GM12878 (cell line): ENCODE measurements at regions of chr1 and their contacts with region 1.

Region 1: DNA sequence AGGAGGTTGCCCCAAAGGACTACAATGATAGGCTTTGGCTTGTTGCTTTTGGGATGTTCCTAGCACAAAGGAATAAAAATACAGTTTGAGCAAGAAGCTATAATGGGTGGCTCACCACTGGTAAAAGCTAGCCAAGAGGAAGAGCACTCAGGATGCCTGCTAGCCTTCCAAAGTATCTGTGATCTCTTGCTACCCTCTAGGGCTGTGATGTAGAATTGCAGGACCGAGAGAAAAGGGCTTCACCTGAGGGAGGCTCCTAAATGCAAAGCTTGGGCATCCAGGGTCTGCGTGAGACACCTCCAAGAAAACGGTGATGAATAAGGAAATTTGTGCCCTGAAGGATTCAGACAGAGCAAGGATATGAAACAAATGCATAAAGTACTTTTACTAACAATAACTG is 17.7 kb downstream of the IVL start:
- DNase-seq: no peak
- ATAC-seq: peak; percentile 87
- H3K4me3 ChIP-seq: no peak overlapping the region
- H3K27ac ChIP-seq: no peak overlapping the region
- H3K4me1 ChIP-seq: no peaks in the 10 kb centered on the region
- H3K27me3 ChIP-seq: peaks cover 0 to 2% of the 10 kb centered on the region in 2 experiments; a peak in 1 of 4 replicates
- CTCF ChIP-seq: peak; percentile 74 to 80 (median 78); a peak in 5 of 6 replicates
- EP300 ChIP-seq: no peak
- POLR2A ChIP-seq: no peak
- RAD21 ChIP-seq: peak; percentile 99

Region 2: GRCh38 chr1:152495066-152495675 is 430.9 kb before region 1 on chr1:
- CTCF ChIA-PET with region 1: interaction called, 10 read pairs
- POLR2A ChIA-PET with region 1: no interaction called
- RAD21 ChIA-PET with region 1: no interaction called
- SMC1A ChIA-PET with region 1: no interaction called
- in situ Hi-C with region 1: no loop called
- intact Hi-C with region 1: no loop called
- DNase-seq: no peak
- ATAC-seq: peak; percentile 72
- H3K4me3 ChIP-seq: no peak overlapping the region
- H3K27ac ChIP-seq: no peak overlapping the region
- H3K4me1 ChIP-seq: no peaks in the 10 kb centered on the region
- H3K27me3 ChIP-seq: no peaks in the 10 kb centered on the region
- CTCF ChIP-seq: peak; percentile 55 to 90 (median 82)
- EP300 ChIP-seq: no peak
- POLR2A ChIP-seq: no peak
- RAD21 ChIP-seq: peak; percentile 59

Region 3: DNA sequence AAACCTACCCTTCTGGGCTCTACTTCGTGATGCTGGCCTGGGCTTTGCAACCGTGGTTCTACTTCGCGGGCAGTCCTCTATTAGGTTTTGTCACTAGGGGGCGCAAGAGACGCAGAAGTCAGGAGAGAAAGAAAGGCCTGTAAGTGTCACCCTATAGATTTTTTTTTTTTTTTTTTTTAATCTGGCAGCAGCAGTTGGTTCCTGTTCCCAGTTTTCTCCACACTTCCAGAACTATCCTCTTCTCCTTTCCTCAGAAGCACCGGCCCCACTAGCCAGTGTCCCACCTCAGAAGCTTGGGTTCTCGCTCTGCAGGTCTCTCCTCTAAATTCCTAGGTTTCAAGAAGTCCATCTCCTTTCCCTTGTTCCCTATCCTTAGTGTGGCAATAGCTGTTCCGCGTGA is 272.0 kb before region 1 on chr1:
- CTCF ChIA-PET with region 1: interaction called, 25 read pairs
- POLR2A ChIA-PET with region 1: no interaction called
- RAD21 ChIA-PET with region 1: interaction called, 18 read pairs
- SMC1A ChIA-PET with region 1: interaction called, 19 read pairs
- in situ Hi-C with region 1: loop called (anchors 5 kb)
- intact Hi-C with region 1: loop called (anchors 5 kb)
- DNase-seq: no peak
- ATAC-seq: peak; percentile 93
- H3K4me3 ChIP-seq: no peak overlapping the region
- H3K27ac ChIP-seq: no peak overlapping the region
- H3K4me1 ChIP-seq: no peaks in the 10 kb centered on the region
- H3K27me3 ChIP-seq: peaks cover 0 to 9% of the 10 kb centered on the region in 2 experiments; a peak in 2 of 4 replicates
- CTCF ChIP-seq: peak; percentile 68 to 84 (median 80)
- EP300 ChIP-seq: no peak
- POLR2A ChIP-seq: no peak
- RAD21 ChIP-seq: peak; percentile 77

Region 4: GRCh38 chr1:152878042-152878441 is 48.0 kb before region 1 on chr1 and contains the start of gene SMCP:
- CTCF ChIA-PET with region 1: interaction called, 106 read pairs
- POLR2A ChIA-PET with region 1: no interaction called
- RAD21 ChIA-PET with region 1: interaction called, 60 read pairs
- SMC1A ChIA-PET with region 1: interaction called, 64 read pairs
- in situ Hi-C with region 1: loop called (anchors 5 kb)
- intact Hi-C with region 1: no loop called
- DNase-seq: no peak
- ATAC-seq: no peak
- H3K4me3 ChIP-seq: no peak within 1 kb of the TSS
- H3K27ac ChIP-seq: no peak within 1 kb of the TSS
- H3K4me1 ChIP-seq: peaks cover 20% of the 10 kb centered on the region
- H3K27me3 ChIP-seq: no peaks in the 10 kb centered on the region
- CTCF ChIP-seq: peak; percentile 12 to 59 (median 14); a peak in 3 of 6 replicates
- EP300 ChIP-seq: no peak
- POLR2A ChIP-seq: no peak
- RAD21 ChIP-seq: peak; percentile 44
- polyA plus RNA-seq, gene SMCP: 0.27 to 0.69 TPM

Region 5: GRCh38 chr1:152906023-152906565 is 20.0 kb before region 1 on chr1:
- CTCF ChIA-PET with region 1: interaction called, 45 read pairs
- POLR2A ChIA-PET with region 1: no interaction called
- RAD21 ChIA-PET with region 1: interaction called, 7 read pairs
- SMC1A ChIA-PET with region 1: interaction called, 4 read pairs
- in situ Hi-C with region 1: no loop called
- intact Hi-C with region 1: no loop called
- DNase-seq: no peak
- ATAC-seq: no peak; the same call in 2 of the 3 replicates
- H3K4me3 ChIP-seq: no peak overlapping the region
- H3K27ac ChIP-seq: 0 out of 2 replicates have a peak overlapping the region, but pooled peaks have one; percentile 12
- H3K4me1 ChIP-seq: peaks cover 40% of the 10 kb centered on the region
- H3K27me3 ChIP-seq: no peaks in the 10 kb centered on the region; a peak in 1 of 4 replicates
- CTCF ChIP-seq: no peak
- EP300 ChIP-seq: no peak
- POLR2A ChIP-seq: no peak
- RAD21 ChIP-seq: no peak

Region 6: DNA sequence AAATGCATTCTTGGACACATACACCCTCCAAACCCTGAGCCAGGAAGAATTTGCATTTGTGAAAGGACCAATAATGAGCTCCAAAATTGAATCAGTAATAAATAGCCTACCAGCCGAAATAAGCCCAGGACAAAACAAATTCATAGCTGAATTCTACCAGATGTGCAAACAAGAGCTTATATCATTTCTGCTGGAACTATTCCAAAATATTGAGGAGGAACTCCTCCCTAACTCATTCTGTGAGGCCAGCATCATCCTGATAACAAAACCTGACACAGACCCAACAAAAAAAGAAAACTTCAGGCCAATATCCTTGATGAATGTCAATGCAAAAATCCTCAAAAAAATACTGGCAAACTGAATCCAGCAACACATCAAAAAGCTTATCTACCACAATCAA is 161.6 kb after region 1 on chr1:
- CTCF ChIA-PET with region 1: no interaction called
- POLR2A ChIA-PET with region 1: no interaction called
- RAD21 ChIA-PET with region 1: no interaction called
- SMC1A ChIA-PET with region 1: no interaction called
- in situ Hi-C with region 1: no loop called
- intact Hi-C with region 1: no loop called
- DNase-seq: no peak
- ATAC-seq: no peak
- H3K4me3 ChIP-seq: no peak overlapping the region
- H3K27ac ChIP-seq: no peak overlapping the region
- H3K4me1 ChIP-seq: no peaks in the 10 kb centered on the region
- H3K27me3 ChIP-seq: no peaks in the 10 kb centered on the region; a peak in 1 of 4 replicates
- CTCF ChIP-seq: no peak
- EP300 ChIP-seq: no peak
- POLR2A ChIP-seq: no peak
- RAD21 ChIP-seq: no peak